Caco-2 (cell line): ENCODE measurements at regions of chr20 and their contacts with region 1.

Region 1: DNA sequence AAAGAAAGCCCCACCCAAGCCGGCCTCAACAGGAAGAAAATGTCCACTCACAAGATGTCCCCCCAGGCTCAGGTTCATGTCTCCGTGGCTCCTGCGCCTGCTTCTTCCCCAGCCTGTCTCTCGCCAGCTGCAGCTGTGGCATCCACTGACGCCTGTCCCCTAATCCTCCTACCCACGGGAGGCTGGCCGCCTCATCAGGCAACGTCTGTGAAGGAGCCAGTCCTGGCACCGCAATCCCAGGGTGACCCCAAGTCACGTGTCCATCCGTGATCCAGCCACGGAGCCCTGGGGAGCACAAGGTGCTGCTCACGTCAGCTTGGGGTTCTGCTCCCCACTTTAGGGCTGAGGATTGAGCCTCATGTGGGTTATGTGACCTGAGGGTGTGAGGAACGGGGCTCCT is 640.3 kb downstream of the CDH26 start:
- DNase-seq: no peak
- H3K4me3 ChIP-seq: no peak overlapping the region
- H3K4me3 Mint-ChIP-seq: no peak overlapping the region
- H3K27ac Mint-ChIP-seq: no peak overlapping the region
- H3K4me1 ChIP-seq: no peaks in the 10 kb centered on the region
- H3K4me1 Mint-ChIP-seq: no peaks in the 10 kb centered on the region
- H3K27me3 ChIP-seq: peaks cover 1% of the 10 kb centered on the region; the same call in 1 of the 2 replicates
- H3K27me3 Mint-ChIP-seq: peaks cover 12% of the 10 kb centered on the region
- CTCF ChIP-seq: no peak

Region 2: GRCh38 chr20:60565083-60565482 is 33.4 kb before region 1 on chr20:
- CTCF ChIA-PET with region 1: no interaction called
- POLR2A ChIA-PET with region 1: no interaction called
- intact Hi-C with region 1: loop called (anchors 1 kb)
- DNase-seq: no peak
- H3K4me3 ChIP-seq: no peak overlapping the region
- H3K4me3 Mint-ChIP-seq: no peak overlapping the region
- H3K27ac Mint-ChIP-seq: no peak overlapping the region
- H3K4me1 ChIP-seq: no peaks in the 10 kb centered on the region
- H3K4me1 Mint-ChIP-seq: no peaks in the 10 kb centered on the region
- H3K27me3 ChIP-seq: no peaks in the 10 kb centered on the region; the same call in 1 of the 2 replicates
- H3K27me3 Mint-ChIP-seq: peaks cover 38% of the 10 kb centered on the region
- CTCF ChIP-seq: no peak